ENCODE measurements at regions of chr11 and their contacts with region 1.

Region 1: GRCh38 chr11:106585061-106585460 is 433.2 kb downstream of the GUCY1A2 start:
- DNase-seq: peak; percentile 77
- ATAC-seq: peak; percentile 95
- H3K4me3 ChIP-seq: no peak overlapping the region
- H3K27ac ChIP-seq: no peak overlapping the region
- H3K4me1 ChIP-seq: no peaks in the 10 kb centered on the region
- H3K27me3 ChIP-seq: no peaks in the 10 kb centered on the region
- CTCF ChIP-seq: peak; percentile 88

Region 2: GRCh38 chr11:106231591-106231990 is 353.5 kb before region 1 on chr11:
- CTCF ChIA-PET with region 1: interaction called, 5 read pairs
- POLR2A ChIA-PET with region 1: no interaction called
- intact Hi-C with region 1: loop called (anchors 1 kb)
- DNase-seq: peak; percentile 50
- ATAC-seq: peak; percentile 94
- H3K4me3 ChIP-seq: no peak overlapping the region
- H3K27ac ChIP-seq: no peak overlapping the region
- H3K4me1 ChIP-seq: no peaks in the 10 kb centered on the region
- H3K27me3 ChIP-seq: no peaks in the 10 kb centered on the region
- CTCF ChIP-seq: peak; percentile 59

Region 3: DNA sequence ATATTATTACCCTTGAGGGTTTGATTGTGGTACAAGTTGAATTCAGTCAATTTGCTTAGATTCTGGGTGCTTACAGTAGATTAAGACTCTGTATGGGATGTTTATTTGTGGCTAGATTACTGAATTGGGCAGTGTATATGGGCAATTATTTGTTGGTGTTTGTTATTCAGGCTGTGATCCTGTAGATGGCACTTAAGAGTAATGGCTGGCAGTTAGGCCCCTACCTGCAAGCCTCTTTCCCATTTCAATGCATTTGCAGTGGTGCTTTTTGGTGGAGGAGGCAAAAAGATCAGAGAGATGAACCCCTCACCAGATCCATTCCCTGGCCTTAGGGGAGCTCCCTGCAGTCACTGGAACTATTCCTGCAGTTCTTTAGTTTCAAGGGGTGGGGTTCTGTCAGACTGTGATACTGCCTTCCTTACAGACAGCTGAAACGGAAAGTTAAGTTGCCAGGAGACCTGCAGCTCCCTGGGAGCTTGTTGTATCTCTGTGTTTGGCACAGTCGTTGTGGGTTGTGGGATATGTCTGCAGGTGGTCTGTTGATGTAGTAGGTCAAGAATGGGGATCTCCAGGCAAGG is 308.1 kb before region 1 on chr11:
- CTCF ChIA-PET with region 1: no interaction called
- POLR2A ChIA-PET with region 1: no interaction called
- intact Hi-C with region 1: loop called (anchors 1 kb)
- DNase-seq: peak; percentile 62
- ATAC-seq: peak; percentile 61
- H3K4me3 ChIP-seq: no peak overlapping the region
- H3K27ac ChIP-seq: no peak overlapping the region
- H3K4me1 ChIP-seq: peaks cover 28% of the 10 kb centered on the region
- H3K27me3 ChIP-seq: no peaks in the 10 kb centered on the region
- CTCF ChIP-seq: peak; percentile 87

Region 4: GRCh38 chr11:106306942-106307341 is 278.1 kb before region 1 on chr11:
- CTCF ChIA-PET with region 1: interaction called, 3 read pairs
- POLR2A ChIA-PET with region 1: no interaction called
- intact Hi-C with region 1: loop called (anchors 1 kb)
- DNase-seq: peak; percentile 44
- ATAC-seq: peak; percentile 82
- H3K4me3 ChIP-seq: no peak overlapping the region
- H3K27ac ChIP-seq: no peak overlapping the region
- H3K4me1 ChIP-seq: peaks cover 10% of the 10 kb centered on the region
- H3K27me3 ChIP-seq: no peaks in the 10 kb centered on the region
- CTCF ChIP-seq: peak; percentile 62

Region 5: DNA sequence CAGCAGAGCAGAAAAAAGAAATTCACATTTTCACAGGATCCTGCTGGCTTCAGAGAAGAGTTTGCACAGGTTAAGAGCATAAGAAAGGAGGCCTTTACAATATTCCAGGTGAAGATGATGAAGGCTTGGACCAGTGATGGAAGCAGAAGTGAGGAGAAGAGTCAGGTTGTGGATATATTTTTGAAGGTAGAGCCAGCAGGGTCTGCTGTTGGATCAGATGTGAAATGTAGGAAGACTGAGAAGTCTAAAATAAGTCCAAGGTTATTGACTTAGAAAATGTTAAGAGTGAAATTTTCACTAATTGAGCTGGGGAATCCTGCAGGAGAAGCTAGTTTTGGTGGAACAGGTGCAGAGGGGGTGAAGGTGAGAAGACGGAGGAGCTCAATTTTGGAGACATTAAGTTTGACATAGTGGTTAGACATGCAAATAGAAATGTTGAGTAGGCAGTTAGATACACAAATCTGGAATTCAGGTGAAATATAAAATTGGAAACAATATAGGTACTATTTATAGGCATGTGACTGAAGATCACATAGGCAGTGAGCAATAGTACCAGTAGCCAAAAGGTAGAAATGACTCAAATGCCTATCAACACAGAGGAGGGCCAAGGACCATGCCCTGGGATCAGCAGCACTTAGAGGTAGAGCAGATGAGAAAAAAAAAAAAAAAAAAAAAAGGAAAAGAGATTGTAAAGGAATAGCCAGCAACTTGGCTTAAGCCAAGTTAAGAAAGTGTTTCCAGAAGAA is 255.6 kb before region 1 on chr11:
- CTCF ChIA-PET with region 1: interaction called, 6 read pairs
- POLR2A ChIA-PET with region 1: no interaction called
- intact Hi-C with region 1: loop called (anchors 1 kb)
- DNase-seq: peak; percentile 76
- ATAC-seq: peak; percentile 84
- H3K4me3 ChIP-seq: no peak overlapping the region
- H3K27ac ChIP-seq: no peak overlapping the region
- H3K4me1 ChIP-seq: peaks cover 28% of the 10 kb centered on the region
- H3K27me3 ChIP-seq: no peaks in the 10 kb centered on the region
- CTCF ChIP-seq: peak; percentile 33; the same call in 1 of the 2 replicates

Measured in PC-3 (cell line).